Activated CD4-positive, alpha-beta T cell treated with anti-CD3 and anti-CD28 coated beads for 36 hours (primary cell): ENCODE measurements at regions of chr10 and their contacts with region 1.

Region 1: DNA sequence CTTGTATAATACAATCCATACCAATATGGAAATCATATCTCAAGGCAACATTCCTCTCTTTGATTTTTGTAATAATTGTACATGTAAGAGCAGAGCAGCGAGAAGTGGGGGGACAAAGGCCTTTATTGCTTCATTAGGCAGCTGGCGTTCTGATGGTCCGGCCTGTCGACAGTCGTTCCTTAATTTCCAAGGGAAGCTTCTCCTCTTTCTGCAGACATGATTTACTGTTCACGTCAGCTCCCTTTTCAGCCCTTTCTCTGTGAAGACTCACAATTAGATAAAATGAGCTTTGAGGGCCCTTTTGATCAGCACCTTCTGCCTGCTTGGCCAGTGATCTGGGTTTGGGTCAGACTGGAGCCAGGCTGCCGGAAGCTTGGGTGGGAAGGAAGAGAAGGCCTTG is 65.6 kb upstream of the CTBP2 start:
- DNase-seq: no peak
- ATAC-seq: no peak
- H3K4me3 Mint-ChIP-seq: no peak overlapping the region
- H3K27ac Mint-ChIP-seq: no peak overlapping the region
- H3K4me1 Mint-ChIP-seq: no peaks in the 10 kb centered on the region
- H3K27me3 Mint-ChIP-seq: peaks cover 2% of the 10 kb centered on the region

Region 2: DNA sequence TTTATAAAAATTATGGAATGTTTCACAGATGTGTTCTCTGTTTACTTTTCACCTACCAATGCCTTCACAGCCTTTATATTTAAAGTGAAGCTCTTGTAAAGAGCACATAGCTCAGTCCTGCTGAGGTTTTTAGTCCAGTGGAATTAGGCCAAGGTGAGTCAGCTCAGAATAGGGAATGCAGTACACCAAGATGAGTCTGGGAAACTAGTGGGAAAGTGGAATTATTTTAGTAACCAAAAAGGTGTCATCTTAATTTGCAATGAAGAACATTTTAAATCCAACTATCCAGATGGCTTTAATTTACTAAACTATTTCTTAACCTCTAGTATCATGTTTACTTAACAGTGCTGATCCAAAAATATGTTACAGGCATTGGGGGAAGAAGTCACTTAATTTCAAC is 170.7 kb after region 1 on chr10:
- CTCF ChIA-PET with region 1: no interaction called
- POLR2A ChIA-PET with region 1: interaction called, 11 read pairs
- intact Hi-C with region 1: no loop called
- DNase-seq: no peak
- ATAC-seq: no peak
- H3K4me3 Mint-ChIP-seq: no peak overlapping the region
- H3K27ac Mint-ChIP-seq: no peak overlapping the region
- H3K4me1 Mint-ChIP-seq: no peaks in the 10 kb centered on the region
- H3K27me3 Mint-ChIP-seq: peaks cover 3% of the 10 kb centered on the region